ENCODE measurements at regions of chr3 and their contacts with region 1.

Region 1: GRCh38 chr3:136196401-136197158 is 445 bp upstream of the MSL2 start:
- DNase-seq: peak; percentile 97 to 100
- H3K4me3 ChIP-seq: peak overlapping the region; percentile 84
- H3K27ac ChIP-seq: peak overlapping the region; percentile 95
- H3K4me1 ChIP-seq: peaks cover 30% of the 10 kb centered on the region
- H3K27me3 ChIP-seq: no peaks in the 10 kb centered on the region
- CTCF ChIP-seq: no peak

Region 2: GRCh38 chr3:135834465-135834864 is 362.1 kb before region 1 on chr3:
- CTCF ChIA-PET with region 1: no interaction called
- POLR2A ChIA-PET with region 1: no interaction called
- intact Hi-C with region 1: no loop called
- DNase-seq: no peak
- H3K4me3 ChIP-seq: no peak overlapping the region
- H3K27ac ChIP-seq: no peak overlapping the region
- H3K4me1 ChIP-seq: no peaks in the 10 kb centered on the region
- H3K27me3 ChIP-seq: no peaks in the 10 kb centered on the region
- CTCF ChIP-seq: no peak

Region 3: DNA sequence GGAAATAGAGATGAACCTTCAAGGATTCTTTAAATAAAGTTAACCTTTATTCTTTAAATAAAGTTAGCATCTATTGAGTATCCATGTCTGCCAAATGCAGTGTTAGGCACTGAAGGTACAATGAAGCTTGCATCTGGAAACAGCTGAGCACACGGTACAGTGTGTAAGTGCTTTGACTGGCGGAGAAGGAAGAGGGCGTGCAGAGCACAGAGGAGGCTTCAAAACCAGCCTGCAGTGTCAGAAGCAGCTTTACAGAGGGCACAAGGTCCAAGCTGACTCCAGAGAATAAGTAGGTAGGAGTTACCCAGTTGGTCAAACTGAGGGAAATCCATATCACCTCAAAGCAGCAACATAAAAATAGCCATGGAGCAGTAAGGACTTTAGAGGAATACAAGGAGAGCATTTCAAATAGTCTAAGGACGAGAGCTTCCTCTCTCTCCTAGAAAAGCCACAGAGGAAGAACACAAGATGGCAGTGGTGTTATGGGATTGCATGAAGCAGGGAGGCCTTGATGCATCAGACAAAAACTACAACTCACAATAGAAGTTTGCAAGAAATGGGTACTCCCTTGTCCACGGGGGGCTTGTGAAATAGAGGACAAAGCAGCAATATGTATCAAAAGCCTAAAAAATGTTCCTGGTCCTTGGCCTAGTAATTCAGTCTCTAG is 291.4 kb before region 1 on chr3:
- CTCF ChIA-PET with region 1: no interaction called
- POLR2A ChIA-PET with region 1: no interaction called
- intact Hi-C with region 1: loop called (anchors 10 kb)
- DNase-seq: no peak
- H3K4me3 ChIP-seq: no peak overlapping the region
- H3K27ac ChIP-seq: no peak overlapping the region
- H3K4me1 ChIP-seq: peaks cover 26% of the 10 kb centered on the region
- H3K27me3 ChIP-seq: no peaks in the 10 kb centered on the region
- CTCF ChIP-seq: no peak

Region 4: GRCh38 chr3:136093771-136094170 is 102.8 kb before region 1 on chr3:
- CTCF ChIA-PET with region 1: no interaction called
- POLR2A ChIA-PET with region 1: interaction called, 13 read pairs
- intact Hi-C with region 1: no loop called
- DNase-seq: no peak
- H3K4me3 ChIP-seq: no peak overlapping the region
- H3K27ac ChIP-seq: no peak overlapping the region
- H3K4me1 ChIP-seq: no peaks in the 10 kb centered on the region
- H3K27me3 ChIP-seq: no peaks in the 10 kb centered on the region
- CTCF ChIP-seq: no peak

Region 5: GRCh38 chr3:136250226-136250902 is 53.8 kb after region 1 on chr3 and contains the start of gene PCCB:
- CTCF ChIA-PET with region 1: interaction called, 3 read pairs
- POLR2A ChIA-PET with region 1: interaction called, 7 read pairs
- intact Hi-C with region 1: loop called (anchors 1 kb)
- DNase-seq: peak; percentile 90 to 97
- H3K4me3 ChIP-seq: peak within 1 kb of the TSS; percentile 51
- H3K27ac ChIP-seq: peak within 1 kb of the TSS; percentile 75
- H3K4me1 ChIP-seq: peaks cover 28% of the 10 kb centered on the region
- H3K27me3 ChIP-seq: no peaks in the 10 kb centered on the region
- CTCF ChIP-seq: peak; percentile 73
- total RNA-seq, gene PCCB: 46.8 and 49.3 TPM in 2 replicates

Region 6: GRCh38 chr3:136624894-136625815 is 428.6 kb after region 1 on chr3:
- CTCF ChIA-PET with region 1: no interaction called
- POLR2A ChIA-PET with region 1: interaction called, 3 read pairs
- intact Hi-C with region 1: loop called (anchors 10 kb)
- DNase-seq: peak; percentile 55 to 92
- H3K4me3 ChIP-seq: no peak overlapping the region
- H3K27ac ChIP-seq: peak overlapping the region; percentile 45; the same call in 1 of the 2 replicates
- H3K4me1 ChIP-seq: peaks cover 53% of the 10 kb centered on the region
- H3K27me3 ChIP-seq: no peaks in the 10 kb centered on the region
- CTCF ChIP-seq: no peak

Region 7: GRCh38 chr3:137008131-137008530 is 811.6 kb after region 1 on chr3:
- CTCF ChIA-PET with region 1: no interaction called
- POLR2A ChIA-PET with region 1: no interaction called
- intact Hi-C with region 1: no loop called
- DNase-seq: no peak
- H3K4me3 ChIP-seq: no peak overlapping the region
- H3K27ac ChIP-seq: no peak overlapping the region
- H3K4me1 ChIP-seq: no peaks in the 10 kb centered on the region
- H3K27me3 ChIP-seq: no peaks in the 10 kb centered on the region
- CTCF ChIP-seq: no peak

Region 8: GRCh38 chr3:137946345-137946973 is 1749.9 kb after region 1 on chr3:
- CTCF ChIA-PET with region 1: no interaction called
- POLR2A ChIA-PET with region 1: no interaction called
- intact Hi-C with region 1: no loop called
- DNase-seq: peak; percentile 48 to 58
- H3K4me3 ChIP-seq: no peak overlapping the region
- H3K27ac ChIP-seq: no peak overlapping the region
- H3K4me1 ChIP-seq: no peaks in the 10 kb centered on the region
- H3K27me3 ChIP-seq: 0 out of 2 replicates have a peak, but pooled peaks cover 9% of the 10 kb centered on the region
- CTCF ChIP-seq: peak; percentile 88

Measured in PC-9 (cell line).